ENCODE measurements at regions of chr7 and their contacts with region 1.

Region 1: GRCh38 chr7:131895541-131896173 is 339.2 kb upstream of the PODXL start:
- DNase-seq: no peak
- ATAC-seq: no peak
- H3K4me3 ChIP-seq: no peak overlapping the region
- H3K27ac ChIP-seq: no peak overlapping the region
- H3K4me1 ChIP-seq: no peaks in the 10 kb centered on the region
- H3K27me3 ChIP-seq: no peaks in the 10 kb centered on the region
- CTCF ChIP-seq: no peak

Region 2: DNA sequence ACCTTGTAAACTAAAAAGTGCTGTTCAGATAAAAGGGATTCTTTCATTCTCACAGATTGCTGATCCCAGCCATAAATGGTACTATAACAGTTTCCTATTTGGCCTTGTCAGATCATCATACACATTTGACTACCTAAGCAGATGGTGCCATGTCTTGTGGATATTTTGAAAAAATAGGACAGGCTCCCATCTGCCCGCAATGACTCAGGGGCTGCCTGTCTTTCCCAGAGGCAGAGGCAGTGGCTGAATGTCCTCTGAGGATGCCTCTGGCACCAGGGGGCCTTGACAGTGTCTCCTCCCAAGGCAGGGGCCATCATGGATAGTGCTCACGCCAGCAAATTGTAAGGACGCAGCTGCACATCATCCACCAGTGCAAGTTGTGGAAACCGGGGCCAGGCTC is 16.2 kb before region 1 on chr7:
- intact Hi-C with region 1: loop called in 1 of 2 experiments (anchors 2 kb)
- DNase-seq: no peak
- ATAC-seq: no peak
- H3K4me3 ChIP-seq: no peak overlapping the region
- H3K27ac ChIP-seq: no peak overlapping the region
- H3K4me1 ChIP-seq: no peaks in the 10 kb centered on the region
- H3K27me3 ChIP-seq: no peaks in the 10 kb centered on the region
- CTCF ChIP-seq: no peak

Measured in psoas muscle (tissue), 8 donors.